ENCODE measurements at regions of chr6 and their contacts with region 1.

Region 1: DNA sequence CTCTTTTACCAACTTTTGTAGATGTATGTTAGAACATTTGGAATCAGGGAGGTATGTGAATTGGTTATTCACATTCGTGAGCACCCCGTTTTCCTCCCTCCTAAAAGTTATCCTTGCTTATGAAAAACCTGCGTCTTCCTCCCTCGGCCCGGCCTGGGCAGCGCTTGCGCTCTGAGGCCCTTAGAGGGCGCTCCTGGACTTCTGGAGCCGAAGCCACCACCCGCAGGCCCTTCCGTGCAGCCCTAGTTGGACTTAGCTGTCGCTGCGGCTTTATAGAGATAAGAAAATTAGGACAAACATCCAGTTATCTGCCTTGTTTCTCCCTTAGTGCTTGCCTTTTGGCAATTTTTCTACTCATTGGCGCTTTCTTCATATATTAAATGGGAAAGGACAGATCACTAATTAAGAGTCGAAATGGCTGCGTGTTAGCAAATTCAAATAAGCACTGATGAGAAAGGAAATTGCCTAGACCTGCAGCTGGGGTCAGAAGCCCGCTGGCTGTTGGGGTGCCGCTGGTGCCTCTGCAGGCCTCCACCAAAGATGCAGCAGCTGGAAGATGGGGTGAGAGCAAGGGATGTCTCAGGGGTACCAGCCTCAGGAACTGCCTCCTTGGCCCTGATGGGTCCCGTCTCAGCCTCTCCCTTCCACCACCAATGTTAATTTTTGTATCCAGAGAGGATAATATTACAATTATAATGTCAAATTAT is 5.2 kb downstream of the FNDC1 start:
- DNase-seq: peak; percentile 63
- ATAC-seq: peak; percentile 90
- H3K4me3 ChIP-seq: no peak overlapping the region
- H3K27ac ChIP-seq: no peak overlapping the region
- H3K4me1 ChIP-seq: peaks cover 1% of the 10 kb centered on the region; the same call in 1 of the 2 replicates
- H3K27me3 ChIP-seq: peaks cover 22% of the 10 kb centered on the region
- CTCF ChIP-seq: peak; percentile 95
- POLR2A ChIP-seq: no peak
- RAD21 ChIP-seq: peak; percentile 94

Region 2: GRCh38 chr6:159252955-159253508 is 78.6 kb after region 1 on chr6:
- CTCF ChIA-PET with region 1: no interaction called
- POLR2A ChIA-PET with region 1: no interaction called
- dilution Hi-C with region 1: no loop called
- in situ Hi-C with region 1: no loop called
- intact Hi-C with region 1: loop called (anchors 2 kb)
- DNase-seq: peak; percentile 45
- ATAC-seq: peak; percentile 94
- H3K4me3 ChIP-seq: no peak overlapping the region
- H3K27ac ChIP-seq: no peak overlapping the region
- H3K4me1 ChIP-seq: no peaks in the 10 kb centered on the region
- H3K27me3 ChIP-seq: no peaks in the 10 kb centered on the region
- CTCF ChIP-seq: peak; percentile 51
- POLR2A ChIP-seq: no peak
- RAD21 ChIP-seq: peak; percentile 27; the same call in 1 of the 2 replicates

Region 3: GRCh38 chr6:159463119-159463829 is 288.9 kb after region 1 on chr6:
- CTCF ChIA-PET with region 1: interaction called, 3 read pairs
- POLR2A ChIA-PET with region 1: no interaction called
- dilution Hi-C with region 1: no loop called
- in situ Hi-C with region 1: no loop called
- intact Hi-C with region 1: loop called (anchors 2 kb)
- DNase-seq: peak; percentile 10
- ATAC-seq: no peak
- H3K4me3 ChIP-seq: no peak overlapping the region
- H3K27ac ChIP-seq: no peak overlapping the region
- H3K4me1 ChIP-seq: no peaks in the 10 kb centered on the region
- H3K27me3 ChIP-seq: no peaks in the 10 kb centered on the region
- CTCF ChIP-seq: peak; percentile 35
- POLR2A ChIP-seq: no peak
- RAD21 ChIP-seq: peak; percentile 27; the same call in 1 of the 2 replicates

Region 4: GRCh38 chr6:159929819-159930218 is 755.4 kb after region 1 on chr6:
- CTCF ChIA-PET with region 1: no interaction called
- POLR2A ChIA-PET with region 1: no interaction called
- dilution Hi-C with region 1: no loop called
- in situ Hi-C with region 1: no loop called
- intact Hi-C with region 1: loop called (anchors 10 kb)
- DNase-seq: no peak
- ATAC-seq: no peak
- H3K4me3 ChIP-seq: no peak overlapping the region
- H3K27ac ChIP-seq: no peak overlapping the region
- H3K4me1 ChIP-seq: peaks cover 5% of the 10 kb centered on the region
- H3K27me3 ChIP-seq: peaks cover 5% of the 10 kb centered on the region
- CTCF ChIP-seq: no peak
- POLR2A ChIP-seq: no peak
- RAD21 ChIP-seq: no peak

Measured in IMR-90 (cell line).